Right lobe of liver (tissue), 6 donors: ENCODE measurements at regions of chr20 and their contacts with region 1.

Region 1: DNA sequence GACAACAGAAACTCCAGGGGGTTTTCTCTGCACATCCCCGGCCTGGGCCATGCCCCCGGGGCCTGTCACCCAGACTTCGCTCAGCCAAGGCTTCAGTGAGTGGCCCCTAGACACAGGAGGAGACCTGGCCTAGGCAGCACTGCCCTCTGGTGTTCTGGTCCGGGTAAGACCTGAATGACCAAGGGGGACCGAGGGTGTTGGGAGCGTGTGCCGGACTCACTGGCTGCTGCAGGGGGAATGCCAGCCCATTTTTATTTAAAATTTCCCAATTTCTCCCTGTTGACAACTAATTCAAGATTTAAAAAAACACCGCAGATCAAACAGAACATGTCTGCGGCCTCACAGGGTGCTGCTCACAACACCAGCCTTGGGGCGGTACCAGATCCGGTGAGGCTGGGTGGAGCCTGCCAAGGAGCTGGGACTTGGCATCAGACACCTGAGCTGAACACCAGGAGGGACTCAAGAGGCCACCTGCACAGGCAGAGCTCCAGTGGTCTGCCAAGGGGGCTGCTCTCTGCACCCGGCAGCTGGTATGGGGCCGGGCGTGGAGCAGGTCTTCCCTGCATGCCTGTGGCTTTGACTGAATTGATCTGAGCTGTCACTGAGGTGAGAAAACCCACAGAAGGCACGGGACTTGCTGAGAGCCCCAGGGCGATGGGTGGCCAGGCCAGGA is 47.8 kb downstream of the DSTN start:
- DNase-seq: peak; percentile 30 to 60 (median 49)
- ATAC-seq: peak; percentile 7 to 38 (median 15)
- H3K4me3 ChIP-seq: no peak overlapping the region
- H3K27ac ChIP-seq: no peak overlapping the region
- H3K4me1 ChIP-seq: no peaks in the 10 kb centered on the region
- H3K27me3 ChIP-seq: no peaks in the 10 kb centered on the region
- CTCF ChIP-seq: peak; percentile 37 to 51 (median 44)
- POLR2A ChIP-seq: no peak

Region 2: GRCh38 chr20:17536944-17537444 is 80.7 kb before region 1 on chr20:
- intact Hi-C with region 1: loop called (anchors 10 kb)
- DNase-seq: peak in 2 of 3 donors; percentile 41 to 69
- ATAC-seq: peak; percentile 99
- H3K4me3 ChIP-seq: no peak overlapping the region
- H3K27ac ChIP-seq: no peak overlapping the region
- H3K4me1 ChIP-seq: peaks cover 0 to 1% (median 0%) of the 10 kb centered on the region in 4 donors
- H3K27me3 ChIP-seq: no peaks in the 10 kb centered on the region
- CTCF ChIP-seq: peak; percentile 77 to 95 (median 82)
- POLR2A ChIP-seq: no peak

Region 3: DNA sequence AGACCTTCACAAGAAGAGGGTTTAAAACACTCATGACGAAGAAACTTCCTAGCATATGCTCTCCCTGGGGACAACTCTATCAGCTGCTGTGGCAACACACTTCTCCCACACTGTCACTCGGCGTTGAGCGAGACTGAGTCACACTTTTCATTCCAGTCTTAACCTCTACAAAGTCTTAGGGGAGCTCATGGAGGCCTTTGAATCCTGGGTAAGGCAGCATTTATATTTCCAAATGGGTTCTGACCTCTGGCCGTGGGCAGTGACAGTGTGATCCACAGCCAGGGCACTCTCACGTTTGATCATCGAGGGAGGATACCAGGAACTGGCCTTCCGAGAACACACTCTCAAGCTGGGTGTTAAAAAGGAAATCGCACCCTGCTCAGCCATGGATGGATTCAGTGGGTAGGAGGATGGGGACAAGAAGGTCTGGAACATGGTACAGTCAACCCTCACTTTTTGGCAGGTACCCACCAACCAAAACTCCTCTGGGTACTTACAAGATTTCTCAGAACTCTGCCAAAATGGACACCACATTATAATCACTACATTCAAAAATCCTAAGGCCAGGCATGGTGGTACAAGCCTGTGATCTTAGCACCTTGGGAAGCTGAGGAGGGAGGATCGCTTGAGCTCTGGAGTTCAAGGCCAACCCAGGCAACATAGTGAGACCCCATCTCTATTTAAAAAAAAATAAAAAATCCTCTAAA is 44.8 kb after region 1 on chr20:
- intact Hi-C with region 1: no loop called
- DNase-seq: peak in 1 of 3 donors; percentile 53
- ATAC-seq: peak; percentile 69 to 80 (median 74)
- H3K4me3 ChIP-seq: no peak overlapping the region
- H3K27ac ChIP-seq: peak overlapping the region in 2 of 3 donors; percentile 2 to 63
- H3K4me1 ChIP-seq: peaks cover 0 to 43% (median 21%) of the 10 kb centered on the region in 4 donors
- H3K27me3 ChIP-seq: no peaks in the 10 kb centered on the region
- CTCF ChIP-seq: no peak
- POLR2A ChIP-seq: no peak

Region 4: DNA sequence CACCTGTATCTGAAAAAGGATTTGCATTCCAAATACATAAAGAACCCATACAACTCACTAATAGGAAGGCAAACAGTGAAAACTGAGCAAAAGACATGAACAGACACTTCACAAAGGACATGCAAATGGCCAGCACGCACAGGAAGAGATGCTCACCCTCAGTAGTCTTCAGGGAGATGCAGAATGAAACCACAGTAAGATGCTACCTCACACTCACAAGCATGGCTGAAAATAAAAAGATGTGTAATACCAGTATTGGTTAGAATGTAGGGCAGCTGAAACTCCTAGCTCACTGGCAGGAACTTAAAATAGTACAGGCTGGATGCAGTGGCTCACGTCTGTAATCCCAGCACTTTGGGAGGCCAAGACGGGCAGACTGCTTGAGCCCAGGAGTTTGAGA is 286.3 kb after region 1 on chr20:
- intact Hi-C with region 1: loop called in 1 of 2 experiments (anchors 10 kb)
- DNase-seq: no peak
- ATAC-seq: no peak
- H3K4me3 ChIP-seq: no peak overlapping the region
- H3K27ac ChIP-seq: no peak overlapping the region
- H3K4me1 ChIP-seq: no peaks in the 10 kb centered on the region
- H3K27me3 ChIP-seq: no peaks in the 10 kb centered on the region
- CTCF ChIP-seq: no peak
- POLR2A ChIP-seq: no peak